ENCODE measurements at regions of chr6 and their contacts with region 1.

Region 1: GRCh38 chr6:26087284-26088115 is at the start of gene HFE:
- DNase-seq: peak; percentile 46
- ATAC-seq: peak; percentile 29
- H3K4me3 Mint-ChIP-seq: peak within 1 kb of the TSS; percentile 68
- H3K27ac Mint-ChIP-seq: peak within 1 kb of the TSS; percentile 22
- H3K4me1 Mint-ChIP-seq: peaks cover 19% of the 10 kb centered on the region
- H3K27me3 Mint-ChIP-seq: no peaks in the 10 kb centered on the region
- total RNA-seq, gene HFE: 1.1 to 1.4 TPM

Region 2: DNA sequence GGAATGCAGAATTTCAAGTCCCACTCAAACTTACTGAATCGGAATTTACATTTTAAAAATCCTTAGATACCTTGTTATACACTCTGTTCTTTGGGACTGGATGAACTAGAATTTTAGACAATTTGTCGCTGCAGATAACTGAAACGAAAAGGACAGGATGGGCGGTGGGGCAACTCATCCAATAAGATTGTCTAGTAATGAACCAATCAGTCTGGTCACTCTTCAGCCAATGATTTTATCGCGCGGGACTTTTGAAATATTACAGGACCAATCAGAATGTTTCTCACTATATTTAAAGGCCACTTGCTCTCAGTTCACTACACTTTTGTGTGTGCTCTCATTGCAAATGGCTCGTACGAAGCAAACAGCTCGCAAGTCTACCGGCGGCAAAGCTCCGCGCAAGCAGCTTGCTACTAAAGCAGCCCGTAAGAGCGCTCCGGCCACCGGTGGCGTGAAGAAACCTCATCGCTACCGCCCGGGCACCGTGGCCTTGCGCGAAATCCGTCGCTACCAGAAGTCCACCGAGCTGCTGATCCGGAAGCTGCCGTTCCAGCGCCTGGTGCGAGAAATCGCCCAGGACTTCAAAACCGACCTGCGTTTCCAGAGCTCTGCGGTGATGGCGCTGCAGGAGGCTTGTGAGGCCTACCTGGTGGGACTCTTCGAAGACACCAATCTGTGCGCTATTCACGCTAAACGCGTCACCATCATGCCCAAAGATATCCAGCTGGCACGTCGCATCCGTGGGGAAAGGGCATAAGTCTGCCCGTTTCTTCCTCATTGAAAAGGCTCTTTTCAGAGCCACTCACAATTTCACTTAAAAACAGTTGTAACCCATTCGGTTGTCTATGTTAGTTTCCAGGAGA is 42.2 kb before region 1 on chr6:
- CTCF ChIA-PET with region 1: no interaction called
- POLR2A ChIA-PET with region 1: interaction called, 12 read pairs
- intact Hi-C with region 1: no loop called
- DNase-seq: peak; percentile 83
- ATAC-seq: peak; percentile 63
- H3K4me3 Mint-ChIP-seq: peak overlapping the region; percentile 79
- H3K27ac Mint-ChIP-seq: peak overlapping the region; percentile 99
- H3K4me1 Mint-ChIP-seq: peaks cover 18% of the 10 kb centered on the region
- H3K27me3 Mint-ChIP-seq: no peaks in the 10 kb centered on the region

Region 3: DNA sequence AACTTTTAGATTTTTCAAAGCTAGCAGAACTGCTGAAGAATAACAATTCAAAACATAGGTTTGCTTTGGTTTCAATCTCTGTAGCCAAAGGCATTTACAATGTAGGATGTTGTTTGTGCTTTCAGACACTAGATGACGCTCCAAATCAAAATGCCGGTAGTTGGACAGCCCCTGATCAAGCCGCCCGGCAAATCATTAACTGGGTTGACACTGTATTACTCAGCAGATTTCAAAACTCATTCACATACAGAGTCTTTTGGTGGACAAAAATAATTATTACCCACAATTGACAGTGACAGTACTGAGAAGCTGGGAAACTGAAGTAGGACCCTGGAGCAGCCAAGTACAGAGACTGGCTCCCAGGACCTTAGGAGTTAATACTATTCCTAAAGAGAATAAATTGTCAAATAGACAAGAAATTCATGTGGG is 21.5 kb before region 1 on chr6:
- CTCF ChIA-PET with region 1: interaction called, 376 read pairs
- POLR2A ChIA-PET with region 1: no interaction called
- intact Hi-C with region 1: no loop called
- DNase-seq: peak; percentile 72
- ATAC-seq: peak; percentile 95
- H3K4me3 Mint-ChIP-seq: no peak overlapping the region
- H3K27ac Mint-ChIP-seq: no peak overlapping the region
- H3K4me1 Mint-ChIP-seq: peaks cover 2% of the 10 kb centered on the region
- H3K27me3 Mint-ChIP-seq: no peaks in the 10 kb centered on the region

Region 4: GRCh38 chr6:26071135-26071534 is 16.4 kb before region 1 on chr6:
- CTCF ChIA-PET with region 1: interaction called, 376 read pairs
- POLR2A ChIA-PET with region 1: no interaction called
- intact Hi-C with region 1: no loop called
- DNase-seq: no peak
- ATAC-seq: no peak
- H3K4me3 Mint-ChIP-seq: no peak overlapping the region
- H3K27ac Mint-ChIP-seq: no peak overlapping the region
- H3K4me1 Mint-ChIP-seq: no peaks in the 10 kb centered on the region
- H3K27me3 Mint-ChIP-seq: no peaks in the 10 kb centered on the region